Naive thymus-derived CD4-positive, alpha-beta T cell (primary cell): ENCODE measurements at regions of chr3 and their contacts with region 1.

Region 1: DNA sequence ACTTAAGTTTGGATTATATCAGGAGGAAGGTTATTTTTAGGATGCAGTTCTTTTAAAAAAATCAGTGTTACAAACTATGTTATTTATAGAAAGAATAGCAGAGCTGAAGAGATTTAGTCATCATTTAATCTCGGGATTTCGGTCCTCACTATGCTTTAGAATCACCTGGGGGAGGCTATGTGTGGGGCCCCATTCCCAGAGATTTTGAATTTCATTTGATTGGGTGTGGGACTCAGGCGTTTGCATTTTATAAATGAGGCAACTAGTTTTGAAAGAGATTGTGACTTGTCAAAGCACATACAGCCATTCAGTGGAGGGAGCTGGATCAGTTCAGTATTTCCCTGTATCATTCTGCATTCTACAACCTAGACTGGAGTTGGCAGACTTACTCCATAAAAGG is 36.8 kb downstream of the TFG start:
- DNase-seq: no peak
- ATAC-seq: no peak
- H3K4me3 ChIP-seq: no peak overlapping the region
- H3K4me3 Mint-ChIP-seq: no peak overlapping the region
- H3K27ac ChIP-seq: no peak overlapping the region
- H3K27ac Mint-ChIP-seq: no peak overlapping the region
- H3K4me1 ChIP-seq: no peaks in the 10 kb centered on the region
- H3K4me1 Mint-ChIP-seq: no peaks in the 10 kb centered on the region
- H3K27me3 ChIP-seq: no peaks in the 10 kb centered on the region
- H3K27me3 Mint-ChIP-seq: no peaks in the 10 kb centered on the region

Region 2: GRCh38 chr3:100730524-100730923 is 15.6 kb before region 1 on chr3:
- CTCF ChIA-PET with region 1: no interaction called
- POLR2A ChIA-PET with region 1: no interaction called
- intact Hi-C with region 1: loop called in 1 of 2 experiments (anchors 2 kb)
- DNase-seq: no peak
- ATAC-seq: no peak
- H3K4me3 ChIP-seq: no peak overlapping the region
- H3K4me3 Mint-ChIP-seq: no peak overlapping the region
- H3K27ac ChIP-seq: no peak overlapping the region
- H3K27ac Mint-ChIP-seq: peak overlapping the region in 2 of 9 donors; percentile 1 to 4
- H3K4me1 ChIP-seq: no peaks in the 10 kb centered on the region
- H3K4me1 Mint-ChIP-seq: peaks cover 5 to 36% (median 26%) of the 10 kb centered on the region in 7 donors
- H3K27me3 ChIP-seq: no peaks in the 10 kb centered on the region
- H3K27me3 Mint-ChIP-seq: no peaks in the 10 kb centered on the region

Region 3: GRCh38 chr3:100766069-100766468 is 20.0 kb after region 1 on chr3:
- CTCF ChIA-PET with region 1: no interaction called
- POLR2A ChIA-PET with region 1: no interaction called
- intact Hi-C with region 1: no loop called
- DNase-seq: no peak
- ATAC-seq: no peak
- H3K4me3 ChIP-seq: no peak overlapping the region
- H3K4me3 Mint-ChIP-seq: no peak overlapping the region
- H3K27ac ChIP-seq: no peak overlapping the region
- H3K27ac Mint-ChIP-seq: no peak overlapping the region
- H3K4me1 ChIP-seq: no peaks in the 10 kb centered on the region
- H3K4me1 Mint-ChIP-seq: peaks cover 0 to 14% (median 0%) of the 10 kb centered on the region in 7 donors
- H3K27me3 ChIP-seq: no peaks in the 10 kb centered on the region
- H3K27me3 Mint-ChIP-seq: peaks cover 0 to 9% (median 0%) of the 10 kb centered on the region in 5 donors

Region 4: DNA sequence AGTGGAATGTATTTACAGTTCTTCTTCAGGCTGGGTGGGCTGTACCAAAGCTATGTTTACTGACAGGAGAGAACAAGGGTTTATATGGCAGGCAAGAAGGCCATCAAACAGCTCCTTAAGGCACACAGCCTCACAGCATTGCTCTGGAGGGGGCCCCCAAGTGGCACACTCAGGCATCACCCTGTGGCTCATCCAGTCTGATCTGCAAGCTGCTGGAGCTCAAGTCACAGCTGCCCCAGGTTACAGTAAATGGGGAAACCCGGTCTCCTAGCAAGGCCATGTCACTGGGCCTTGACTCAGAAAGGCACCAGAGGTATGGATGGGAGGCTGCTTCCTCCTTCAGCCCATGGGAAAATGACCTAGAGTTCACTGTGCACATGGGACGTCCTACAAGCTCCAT is 30.7 kb after region 1 on chr3:
- CTCF ChIA-PET with region 1: no interaction called
- POLR2A ChIA-PET with region 1: no interaction called
- intact Hi-C with region 1: no loop called
- DNase-seq: no peak
- ATAC-seq: no peak
- H3K4me3 ChIP-seq: no peak overlapping the region
- H3K4me3 Mint-ChIP-seq: no peak overlapping the region
- H3K27ac ChIP-seq: no peak overlapping the region
- H3K27ac Mint-ChIP-seq: no peak overlapping the region
- H3K4me1 ChIP-seq: no peaks in the 10 kb centered on the region
- H3K4me1 Mint-ChIP-seq: no peaks in the 10 kb centered on the region
- H3K27me3 ChIP-seq: no peaks in the 10 kb centered on the region
- H3K27me3 Mint-ChIP-seq: no peaks in the 10 kb centered on the region